ENCODE measurements at regions of chr1 and their contacts with region 1.

Region 1: DNA sequence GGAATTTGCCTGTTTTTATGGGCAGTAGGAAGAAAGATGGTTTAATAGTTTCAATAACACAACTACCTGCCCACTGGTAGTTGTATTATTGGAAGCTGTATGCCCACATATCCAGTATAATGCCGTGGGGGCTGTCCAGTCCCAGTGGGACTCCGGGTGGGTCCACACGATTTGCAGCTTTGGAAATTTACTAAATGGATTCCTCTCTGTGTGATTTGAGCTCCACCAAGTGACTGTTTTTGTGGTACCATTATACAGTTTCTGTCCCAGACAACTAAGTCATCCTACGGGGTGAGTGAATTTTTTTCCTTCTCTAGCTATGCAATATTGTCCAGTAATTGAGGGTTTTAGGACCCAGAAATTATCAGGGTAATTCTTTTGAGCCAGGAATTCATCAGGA is 86.8 kb downstream of the PLA2G4A start:
- DNase-seq: no peak
- H3K4me3 Mint-ChIP-seq: no peak overlapping the region
- H3K27ac Mint-ChIP-seq: no peak overlapping the region
- H3K4me1 Mint-ChIP-seq: peaks cover 5% of the 10 kb centered on the region
- H3K27me3 Mint-ChIP-seq: no peaks in the 10 kb centered on the region
- CTCF ChIP-seq: no peak

Region 2: GRCh38 chr1:186404454-186405051 is 511.0 kb before region 1 on chr1:
- CTCF ChIA-PET with region 1: no interaction called
- POLR2A ChIA-PET with region 1: interaction called, 3 read pairs
- intact Hi-C with region 1: loop called (anchors 5 kb)
- DNase-seq: peak; percentile 71
- H3K4me3 Mint-ChIP-seq: no peak overlapping the region
- H3K27ac Mint-ChIP-seq: no peak overlapping the region
- H3K4me1 Mint-ChIP-seq: no peaks in the 10 kb centered on the region
- H3K27me3 Mint-ChIP-seq: no peaks in the 10 kb centered on the region
- CTCF ChIP-seq: peak; percentile 78

Region 3: GRCh38 chr1:186974774-186975181 is 59.2 kb after region 1 on chr1:
- CTCF ChIA-PET with region 1: interaction called, 17 read pairs
- POLR2A ChIA-PET with region 1: no interaction called
- intact Hi-C with region 1: no loop called
- DNase-seq: peak; percentile 68
- H3K4me3 Mint-ChIP-seq: no peak overlapping the region
- H3K27ac Mint-ChIP-seq: peak overlapping the region; percentile 3
- H3K4me1 Mint-ChIP-seq: peaks cover 17% of the 10 kb centered on the region
- H3K27me3 Mint-ChIP-seq: no peaks in the 10 kb centered on the region
- CTCF ChIP-seq: no peak

Region 4: GRCh38 chr1:188365871-188366270 is 1450.3 kb after region 1 on chr1:
- CTCF ChIA-PET with region 1: no interaction called
- POLR2A ChIA-PET with region 1: no interaction called
- intact Hi-C with region 1: no loop called
- DNase-seq: no peak
- H3K4me3 Mint-ChIP-seq: no peak overlapping the region
- H3K27ac Mint-ChIP-seq: no peak overlapping the region
- H3K4me1 Mint-ChIP-seq: no peaks in the 10 kb centered on the region
- H3K27me3 Mint-ChIP-seq: no peaks in the 10 kb centered on the region
- CTCF ChIP-seq: peak; percentile 16